ENCODE measurements at regions of chr16 and their contacts with region 1.

Region 1: GRCh38 chr16:75110637-75111513 is 5.7 kb downstream of the LDHD start:
- DNase-seq: peak; percentile 89 to 98
- H3K4me3 ChIP-seq: no peak overlapping the region
- CTCF ChIP-seq: peak in 1 of 3 donors; percentile 64
- POLR2A ChIP-seq: no peak

Region 2: DNA sequence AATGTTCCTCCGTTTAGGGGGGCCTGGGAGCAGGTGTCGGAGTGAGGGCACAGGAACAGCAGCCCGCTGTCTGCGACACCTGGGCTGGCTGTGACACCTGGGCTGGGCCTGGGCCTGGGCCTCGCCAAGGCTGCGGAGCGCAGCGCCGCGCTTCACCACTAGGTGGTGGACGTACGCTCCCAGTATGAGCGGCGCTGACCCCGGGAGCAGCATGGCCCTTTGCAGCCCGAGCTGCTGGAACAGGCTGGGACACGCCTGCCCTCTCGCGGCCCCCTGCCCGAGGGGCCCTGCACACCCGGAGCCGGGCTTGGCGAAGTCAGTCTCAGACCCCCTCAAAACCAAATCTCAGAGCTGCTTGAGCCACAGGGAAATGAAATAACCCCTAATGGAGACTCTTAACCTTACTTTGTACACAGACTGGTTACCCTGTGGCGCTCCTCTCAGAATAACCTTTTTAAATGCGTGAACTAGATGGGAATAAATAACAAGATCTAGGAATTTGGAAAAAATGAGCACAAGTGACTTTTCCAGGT is 297.7 kb before region 1 on chr16:
- intact Hi-C with region 1: loop called (anchors 10 kb)
- DNase-seq: peak; percentile 47 to 91
- H3K4me3 ChIP-seq: no peak overlapping the region
- CTCF ChIP-seq: peak in 1 of 3 donors; percentile 69
- POLR2A ChIP-seq: no peak

Region 3: GRCh38 chr16:74998481-74999218 is 112.2 kb before region 1 on chr16 and contains the start of gene ZNRF1:
- intact Hi-C with region 1: loop called (anchors 2 kb)
- DNase-seq: peak; percentile 77 to 96
- H3K4me3 ChIP-seq: peak within 1 kb of the TSS; percentile 78
- CTCF ChIP-seq: peak in 1 of 3 donors; percentile 40
- POLR2A ChIP-seq: no peak
- total RNA-seq, gene ZNRF1: 19.3 to 46.7 (median 32.9) TPM

Region 4: GRCh38 chr16:75491876-75492275 is 381.0 kb after region 1 on chr16:
- intact Hi-C with region 1: no loop called
- DNase-seq: no peak
- H3K4me3 ChIP-seq: no peak overlapping the region
- CTCF ChIP-seq: no peak
- POLR2A ChIP-seq: no peak

Measured in lower leg skin (tissue), 4 donors.